Caco-2 (cell line): ENCODE measurements at regions of chr15 and their contacts with region 1.

Region 1: GRCh38 chr15:26555898-26556297 is 217.0 kb downstream of the GABRB3 start:
- DNase-seq: no peak
- H3K4me3 ChIP-seq: no peak overlapping the region
- H3K4me3 Mint-ChIP-seq: no peak overlapping the region
- H3K27ac Mint-ChIP-seq: no peak overlapping the region
- H3K4me1 ChIP-seq: no peaks in the 10 kb centered on the region
- H3K4me1 Mint-ChIP-seq: no peaks in the 10 kb centered on the region
- H3K27me3 ChIP-seq: no peaks in the 10 kb centered on the region
- H3K27me3 Mint-ChIP-seq: no peaks in the 10 kb centered on the region
- CTCF ChIP-seq: no peak

Region 2: GRCh38 chr15:26615188-26615926 is 59.5 kb after region 1 on chr15:
- CTCF ChIA-PET with region 1: no interaction called
- POLR2A ChIA-PET with region 1: no interaction called
- intact Hi-C with region 1: loop called (anchors 2 kb)
- DNase-seq: no peak
- H3K4me3 ChIP-seq: no peak overlapping the region
- H3K4me3 Mint-ChIP-seq: no peak overlapping the region
- H3K27ac Mint-ChIP-seq: no peak overlapping the region
- H3K4me1 ChIP-seq: no peaks in the 10 kb centered on the region
- H3K4me1 Mint-ChIP-seq: no peaks in the 10 kb centered on the region
- H3K27me3 ChIP-seq: no peaks in the 10 kb centered on the region
- H3K27me3 Mint-ChIP-seq: no peaks in the 10 kb centered on the region
- CTCF ChIP-seq: no peak